Activated T-helper 1 cell treated with anti-CD3 and anti-CD28 coated beads, Interleukin-12 subunit alpha, Interleukin-12 subunit beta, Interleukin-2, Interleukin-4 antibody, amounts not matched to agents 30 ng/mL and 10 ng/mL and 1 ng/mL, durations not matched to agents 14 hours and 24 hours and 36 hours (primary cell): ENCODE measurements at regions of chr5 and their contacts with region 1.

Region 1: GRCh38 chr5:126988021-126988569 is 42.3 kb downstream of the MARCHF3 start:
- DNase-seq: peak; percentile 31
- H3K4me3 Mint-ChIP-seq: peak overlapping the region; percentile 28
- H3K27ac Mint-ChIP-seq: peak overlapping the region; percentile 86
- H3K4me1 Mint-ChIP-seq: peaks cover 28% of the 10 kb centered on the region
- H3K27me3 Mint-ChIP-seq: no peaks in the 10 kb centered on the region

Region 2: DNA sequence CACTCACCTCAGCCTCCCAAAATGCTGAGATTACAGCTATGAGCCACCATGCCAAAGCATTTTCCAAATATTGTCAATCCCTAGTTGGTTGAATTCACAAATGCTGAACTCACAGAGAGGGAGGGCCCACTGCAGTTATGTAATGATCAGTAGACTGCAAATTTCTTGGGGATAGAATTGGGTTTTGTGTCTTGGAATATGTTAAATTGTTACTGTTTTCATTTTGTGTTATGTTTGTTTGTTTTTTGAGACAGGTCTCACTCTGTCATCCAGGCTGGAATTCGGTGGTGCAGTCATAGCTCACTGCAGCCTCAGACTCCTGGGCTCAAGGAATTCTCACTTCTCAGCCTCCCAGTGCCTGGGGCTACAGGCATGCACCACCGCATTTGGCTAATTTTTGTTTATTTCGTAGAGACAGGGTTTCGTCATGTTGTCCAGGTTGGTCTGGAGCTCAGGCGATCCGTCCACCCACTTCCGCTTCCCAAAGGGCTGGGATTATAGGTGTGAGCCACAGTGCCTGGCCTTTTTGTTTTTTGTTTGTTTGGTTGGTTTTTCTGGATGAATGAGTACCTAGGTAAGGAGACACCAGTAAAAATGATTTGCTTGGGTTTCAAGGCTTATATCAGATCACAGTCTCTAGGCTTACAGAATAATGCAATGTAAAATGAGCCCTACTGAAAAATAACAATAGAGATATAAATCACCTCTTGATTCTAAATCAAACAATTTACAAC is 242.7 kb before region 1 on chr5:
- intact Hi-C with region 1: loop called (anchors 1 kb)
- DNase-seq: no peak
- H3K4me3 Mint-ChIP-seq: no peak overlapping the region
- H3K27ac Mint-ChIP-seq: peak overlapping the region; percentile 40
- H3K4me1 Mint-ChIP-seq: peaks cover 60% of the 10 kb centered on the region
- H3K27me3 Mint-ChIP-seq: peaks cover 1% of the 10 kb centered on the region

Region 3: DNA sequence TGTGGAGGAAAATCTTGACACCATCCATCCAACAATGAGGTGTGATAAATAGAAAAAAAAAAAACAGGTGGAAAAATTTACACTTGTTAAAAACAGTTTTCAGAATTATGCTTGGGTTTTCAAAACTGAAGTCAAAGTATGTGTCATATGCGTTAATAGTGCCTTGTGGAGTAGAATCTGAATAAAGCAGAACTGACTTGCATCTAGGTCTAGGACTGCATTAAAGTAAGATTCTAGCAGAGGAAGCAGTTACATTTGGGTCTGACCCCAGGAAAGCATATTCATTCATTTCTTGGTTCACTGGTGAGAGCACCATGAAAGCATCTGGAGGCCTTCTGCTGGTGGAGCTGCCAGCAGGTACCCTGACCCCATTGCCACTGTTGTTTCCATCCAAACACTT is 46.7 kb before region 1 on chr5:
- intact Hi-C with region 1: loop called (anchors 1 kb)
- DNase-seq: no peak
- H3K4me3 Mint-ChIP-seq: no peak overlapping the region
- H3K27ac Mint-ChIP-seq: no peak overlapping the region
- H3K4me1 Mint-ChIP-seq: no peaks in the 10 kb centered on the region
- H3K27me3 Mint-ChIP-seq: no peaks in the 10 kb centered on the region

Region 4: DNA sequence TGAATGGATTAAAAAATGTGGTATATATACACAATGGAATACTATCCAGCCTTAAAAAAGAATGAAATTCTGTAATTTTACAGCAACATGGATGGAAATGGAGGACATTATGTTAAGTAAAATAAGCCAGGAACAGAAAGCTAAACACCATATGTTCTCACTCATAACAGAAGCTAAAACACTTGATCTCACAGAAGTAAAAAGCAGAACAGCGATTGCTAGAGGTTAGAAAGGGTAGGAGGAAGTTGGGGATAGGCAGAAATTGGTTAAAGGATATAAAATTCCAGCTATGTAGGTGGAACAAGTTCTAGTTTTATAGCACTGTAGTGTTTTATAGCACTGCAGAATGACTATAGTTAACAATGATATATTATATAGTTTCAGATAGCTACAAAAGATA is 26.5 kb after region 1 on chr5:
- intact Hi-C with region 1: loop called (anchors 1 kb)
- DNase-seq: no peak
- H3K4me3 Mint-ChIP-seq: no peak overlapping the region
- H3K27ac Mint-ChIP-seq: no peak overlapping the region
- H3K4me1 Mint-ChIP-seq: peaks cover 22% of the 10 kb centered on the region
- H3K27me3 Mint-ChIP-seq: no peaks in the 10 kb centered on the region

Region 5: DNA sequence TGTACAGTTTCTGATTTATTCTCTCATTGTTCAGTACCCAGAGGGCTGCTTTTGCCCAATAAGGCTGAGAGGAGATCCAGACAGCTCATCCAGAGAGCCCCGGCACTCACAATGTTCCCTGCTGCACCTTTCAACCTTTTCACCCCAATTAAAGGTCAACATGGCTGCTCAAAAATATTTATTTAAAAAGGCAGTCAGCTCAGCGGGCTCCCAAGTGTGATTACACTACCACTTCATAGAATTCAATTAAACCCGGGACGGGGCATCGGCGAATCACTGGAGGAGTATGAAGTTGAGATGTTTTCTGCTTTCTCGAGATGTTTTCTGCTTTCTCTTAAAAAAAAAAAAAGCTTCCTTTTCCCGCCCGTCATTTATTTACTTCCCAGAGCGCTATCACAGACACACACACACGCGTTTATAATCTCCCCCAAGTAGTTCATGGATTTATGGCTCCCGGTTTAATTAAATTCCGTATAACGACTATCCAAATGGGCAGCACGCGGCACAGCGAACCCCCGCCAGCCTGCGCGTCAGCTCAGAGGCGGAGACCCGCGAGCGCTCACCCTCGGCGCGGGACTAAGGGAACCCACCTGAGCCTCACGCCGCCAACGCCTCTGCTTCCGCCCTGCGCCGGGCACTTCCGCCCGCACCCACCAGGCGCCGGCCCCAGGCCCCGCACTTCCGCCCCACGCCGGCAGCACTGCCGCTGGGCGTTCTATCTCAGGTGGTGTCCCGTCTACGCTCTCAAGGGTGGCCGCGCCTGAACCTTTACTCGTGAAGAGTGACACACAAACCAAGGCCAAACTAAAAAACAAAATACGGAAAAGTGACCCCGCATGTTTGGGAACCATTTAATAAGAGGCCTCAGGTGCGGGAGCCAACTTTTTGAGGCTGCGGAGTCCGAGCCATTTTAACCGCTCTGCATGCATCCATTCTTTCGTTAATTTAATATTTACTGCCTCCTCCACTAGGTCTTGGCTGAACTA is 85.1 kb after region 1 on chr5 and contains the start of gene C5orf63:
- intact Hi-C with region 1: loop called (anchors 1 kb)
- DNase-seq: peak; percentile 66
- H3K4me3 Mint-ChIP-seq: peak within 1 kb of the TSS; percentile 92
- H3K27ac Mint-ChIP-seq: peak within 1 kb of the TSS; percentile 88
- H3K4me1 Mint-ChIP-seq: peaks cover 22% of the 10 kb centered on the region
- H3K27me3 Mint-ChIP-seq: no peaks in the 10 kb centered on the region
- total RNA-seq, gene C5orf63: 4.0 and 7.0 TPM in 2 replicates

Region 6: DNA sequence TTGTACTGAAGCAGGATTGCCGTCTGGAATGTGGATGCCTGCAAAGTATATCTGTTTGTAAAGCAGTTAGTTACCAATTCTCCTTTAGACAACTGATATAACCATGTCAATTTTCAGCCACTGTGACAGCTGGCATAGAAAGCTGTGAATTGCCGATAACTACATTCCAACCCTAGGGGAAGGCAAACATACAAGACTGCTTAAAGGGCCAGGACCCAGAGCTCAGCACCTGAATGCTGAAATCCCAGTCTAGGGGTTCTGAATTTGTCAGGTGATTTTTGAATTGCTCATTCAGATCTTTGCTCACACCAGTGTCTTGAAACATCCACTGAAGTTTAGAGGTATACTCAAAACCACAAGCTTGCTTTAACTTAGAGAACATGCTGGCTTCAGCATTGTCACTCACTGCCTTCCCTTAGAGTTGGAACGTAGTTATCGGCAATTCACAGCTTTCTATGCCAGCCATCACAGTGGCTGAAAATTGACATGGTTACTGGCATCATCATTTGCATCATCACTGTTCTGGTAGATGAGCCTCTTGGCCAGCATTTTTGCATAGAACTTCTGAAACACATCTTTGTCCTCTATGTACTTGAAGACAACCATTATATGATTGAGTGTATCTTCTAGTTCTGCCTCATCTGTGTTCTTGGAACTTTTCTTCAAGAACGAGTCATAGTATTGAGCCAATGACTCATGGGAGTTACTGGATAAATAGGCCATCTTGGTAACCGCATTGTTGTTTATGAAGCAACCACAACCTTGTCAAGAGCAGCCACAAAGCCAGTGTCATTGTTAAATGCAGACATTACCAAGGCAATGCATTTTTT is 797.2 kb after region 1 on chr5:
- intact Hi-C with region 1: loop called (anchors 5 kb)
- DNase-seq: peak; percentile 55
- H3K4me3 Mint-ChIP-seq: peak overlapping the region; percentile 62
- H3K27ac Mint-ChIP-seq: peak overlapping the region; percentile 96
- H3K4me1 Mint-ChIP-seq: peaks cover 45% of the 10 kb centered on the region
- H3K27me3 Mint-ChIP-seq: peaks cover 3% of the 10 kb centered on the region